Left ventricle myocardium inferior (tissue), 1 donor: ENCODE measurements at regions of chr16 and their contacts with region 1.

Region 1: GRCh38 chr16:8958344-8959167 is 5.2 kb downstream of the USP7 start:
- DNase-seq: peak; percentile 40
- H3K4me3 ChIP-seq: peak overlapping the region; percentile 22
- H3K27ac ChIP-seq: peak overlapping the region; percentile 58
- H3K4me1 ChIP-seq: peaks cover 90% of the 10 kb centered on the region
- H3K27me3 ChIP-seq: no peaks in the 10 kb centered on the region
- CTCF ChIP-seq: no peak

Region 2: GRCh38 chr16:9090960-9091866 is 132.7 kb after region 1 on chr16 and contains the start of gene HAPSTR1:
- intact Hi-C with region 1: loop called (anchors 10 kb)
- DNase-seq: peak; percentile 100
- H3K4me3 ChIP-seq: peak within 1 kb of the TSS; percentile 94
- H3K27ac ChIP-seq: peak within 1 kb of the TSS; percentile 100
- H3K4me1 ChIP-seq: peaks cover 60% of the 10 kb centered on the region
- H3K27me3 ChIP-seq: no peaks in the 10 kb centered on the region
- CTCF ChIP-seq: no peak
- total RNA-seq, gene HAPSTR1: 52.3 TPM